ENCODE measurements at regions of chr5 and their contacts with region 1.

Region 1: DNA sequence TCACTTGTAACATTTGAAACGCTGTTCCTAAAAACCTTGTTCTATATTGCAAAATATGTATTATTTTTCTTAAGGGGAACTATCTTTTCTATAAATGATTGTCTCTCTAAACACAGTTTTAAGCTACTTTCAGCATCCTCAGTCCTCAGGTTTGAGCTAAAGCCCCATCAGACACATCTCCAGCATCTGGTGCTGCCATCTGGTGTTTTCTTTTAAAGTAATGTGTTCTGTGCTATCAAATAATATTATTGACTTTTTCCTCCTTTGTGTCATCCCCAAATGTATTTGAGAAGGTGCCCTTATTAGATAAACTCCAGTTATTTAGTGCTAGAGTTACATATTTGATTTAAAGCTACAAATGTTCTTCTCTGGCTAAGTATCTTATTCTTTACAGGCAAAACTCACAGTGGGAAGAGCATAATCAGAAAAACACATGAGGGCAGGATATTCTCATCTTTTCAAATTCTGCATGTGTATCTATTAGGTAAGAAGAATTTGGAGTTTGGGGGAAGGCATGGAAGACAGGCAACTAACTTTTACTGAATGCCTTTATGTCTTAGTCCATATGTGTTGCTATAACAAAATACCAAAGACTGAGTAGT is 27.5 kb downstream of the ZNF474 start:
- DNase-seq: no peak
- ATAC-seq: no peak
- H3K4me3 ChIP-seq: no peak overlapping the region
- H3K27ac ChIP-seq: no peak overlapping the region
- H3K4me1 ChIP-seq: peaks cover 0 to 3% of the 10 kb centered on the region in 2 donors
- H3K27me3 ChIP-seq: no peaks in the 10 kb centered on the region
- CTCF ChIP-seq: peak in 2 of 5 experiments; percentile 10 to 15
- POLR2A ChIP-seq: no peak

Region 2: DNA sequence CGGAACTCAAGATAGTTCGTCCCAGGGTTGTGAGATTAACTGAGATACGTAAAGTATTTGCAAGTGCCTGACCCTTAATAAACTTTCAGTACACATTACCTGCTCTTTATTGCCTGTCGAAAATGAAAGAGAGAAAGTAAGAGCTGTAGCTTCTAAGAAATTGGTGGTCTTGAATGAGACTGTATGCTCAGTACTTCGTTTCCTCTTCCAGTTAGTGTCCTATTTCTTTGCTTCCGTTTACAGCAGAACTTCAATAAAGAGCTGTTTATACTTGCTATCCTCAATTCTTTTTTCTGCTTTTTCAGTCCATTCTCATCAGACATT is 194.5 kb before region 1 on chr5:
- in situ Hi-C with region 1: no loop called
- intact Hi-C with region 1: loop called (anchors 5 kb)
- DNase-seq: no peak
- ATAC-seq: peak; percentile 6 to 9
- H3K4me3 ChIP-seq: peak overlapping the region; percentile 74 to 92 (median 87)
- H3K27ac ChIP-seq: peak overlapping the region; percentile 83 to 86 (median 85)
- H3K4me1 ChIP-seq: peaks cover 12 to 16% of the 10 kb centered on the region in 2 donors
- H3K27me3 ChIP-seq: peaks cover 0 to 10% (median 4%) of the 10 kb centered on the region in 3 donors
- CTCF ChIP-seq: no peak
- POLR2A ChIP-seq: no peak

Region 3: DNA sequence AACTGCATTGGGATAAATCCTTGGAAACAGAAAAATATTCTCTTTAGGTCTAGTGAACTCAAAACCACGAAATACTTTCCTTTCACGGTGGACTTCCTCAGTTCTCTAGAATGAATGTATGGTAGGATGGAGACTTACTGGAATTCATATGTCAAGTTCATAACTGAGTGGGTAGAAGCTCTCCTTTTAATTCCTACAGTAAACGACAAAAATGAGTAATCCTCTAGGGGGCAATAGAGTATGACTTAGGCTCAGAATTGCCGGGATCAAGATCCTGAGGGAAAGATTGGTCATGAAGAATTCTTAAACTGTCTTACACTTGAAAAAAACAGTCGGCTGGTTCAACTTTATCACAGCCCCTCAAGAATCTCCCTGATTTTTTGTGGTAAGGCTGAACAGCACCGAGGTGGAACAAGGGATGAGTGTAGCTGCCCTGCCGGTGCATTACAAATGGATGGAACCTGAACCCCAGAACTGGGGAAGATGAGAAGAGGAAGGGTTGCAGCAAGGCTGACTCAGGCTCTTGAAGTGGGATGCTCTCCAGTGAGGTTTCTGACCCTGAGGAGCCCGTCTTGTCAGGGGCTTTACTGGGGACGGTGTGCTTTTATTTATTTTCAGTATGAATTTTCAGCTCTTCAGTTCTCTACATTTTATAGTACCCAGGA is 64.8 kb before region 1 on chr5:
- in situ Hi-C with region 1: no loop called
- intact Hi-C with region 1: loop called (anchors 10 kb)
- DNase-seq: no peak
- ATAC-seq: no peak
- H3K4me3 ChIP-seq: no peak overlapping the region
- H3K27ac ChIP-seq: no peak overlapping the region
- H3K4me1 ChIP-seq: no peaks in the 10 kb centered on the region
- H3K27me3 ChIP-seq: no peaks in the 10 kb centered on the region
- CTCF ChIP-seq: peak in 2 of 5 experiments; percentile 9 to 14
- POLR2A ChIP-seq: no peak

Region 4: GRCh38 chr5:122602700-122603099 is 445.9 kb after region 1 on chr5:
- in situ Hi-C with region 1: no loop called
- intact Hi-C with region 1: no loop called
- DNase-seq: no peak
- ATAC-seq: no peak
- H3K4me3 ChIP-seq: no peak overlapping the region
- H3K27ac ChIP-seq: no peak overlapping the region
- H3K4me1 ChIP-seq: no peaks in the 10 kb centered on the region
- H3K27me3 ChIP-seq: no peaks in the 10 kb centered on the region
- CTCF ChIP-seq: no peak
- POLR2A ChIP-seq: no peak

Measured in gastrocnemius medialis (tissue), 4 donors.